Activated naive CD4-positive, alpha-beta T cell treated with anti-CD3 and anti-CD28 coated beads, Interleukin-2, amount 10 ng/mL, durations not matched to agents 7 days and 5 days (primary cell): ENCODE measurements at regions of chr9 and their contacts with region 1.

Region 1: DNA sequence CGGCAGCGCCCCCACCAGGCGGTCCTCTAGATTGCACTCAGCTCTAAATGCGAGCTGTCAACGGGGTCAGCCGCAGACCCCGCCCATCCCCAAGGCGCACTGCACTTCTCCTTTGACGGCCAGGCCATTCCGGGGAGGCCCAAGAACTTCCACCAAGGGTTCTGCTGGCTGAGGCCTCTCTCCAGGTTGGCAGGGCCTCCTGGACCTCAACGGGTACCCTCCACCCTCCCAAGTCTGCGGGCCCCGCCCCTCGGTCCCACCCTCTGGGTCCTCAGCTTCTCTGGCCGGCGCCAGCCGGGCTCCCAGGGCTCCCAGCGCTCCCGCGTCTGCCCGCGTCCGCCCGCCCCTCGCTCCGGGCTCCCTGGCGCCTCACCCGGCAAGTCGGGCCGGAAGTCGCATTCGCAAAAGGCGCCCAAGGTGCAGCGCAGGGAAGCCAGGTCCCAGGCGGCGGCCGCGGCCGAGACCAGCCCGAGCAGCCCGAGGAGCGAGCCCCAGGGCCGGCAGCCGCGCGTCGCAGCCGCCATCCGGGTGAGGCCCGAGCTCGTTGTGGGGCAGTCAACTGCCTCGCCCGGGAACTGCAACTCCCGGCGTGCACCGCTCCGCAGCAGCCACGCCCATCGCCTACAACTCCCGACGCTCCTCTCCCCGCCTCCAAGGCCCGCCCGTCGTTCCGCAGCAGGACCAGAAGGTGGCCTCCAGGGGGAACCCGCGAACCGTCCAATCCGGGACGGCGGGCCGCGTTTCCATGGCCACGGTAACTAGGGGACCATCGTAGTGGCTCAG is at the start of gene TOR2A:
- DNase-seq: peak; percentile 99
- H3K4me3 Mint-ChIP-seq: peak within 1 kb of the TSS; percentile 79
- H3K27ac Mint-ChIP-seq: peak within 1 kb of the TSS; percentile 92
- H3K4me1 Mint-ChIP-seq: peaks cover 28% of the 10 kb centered on the region
- H3K27me3 Mint-ChIP-seq: no peaks in the 10 kb centered on the region

Region 2: DNA sequence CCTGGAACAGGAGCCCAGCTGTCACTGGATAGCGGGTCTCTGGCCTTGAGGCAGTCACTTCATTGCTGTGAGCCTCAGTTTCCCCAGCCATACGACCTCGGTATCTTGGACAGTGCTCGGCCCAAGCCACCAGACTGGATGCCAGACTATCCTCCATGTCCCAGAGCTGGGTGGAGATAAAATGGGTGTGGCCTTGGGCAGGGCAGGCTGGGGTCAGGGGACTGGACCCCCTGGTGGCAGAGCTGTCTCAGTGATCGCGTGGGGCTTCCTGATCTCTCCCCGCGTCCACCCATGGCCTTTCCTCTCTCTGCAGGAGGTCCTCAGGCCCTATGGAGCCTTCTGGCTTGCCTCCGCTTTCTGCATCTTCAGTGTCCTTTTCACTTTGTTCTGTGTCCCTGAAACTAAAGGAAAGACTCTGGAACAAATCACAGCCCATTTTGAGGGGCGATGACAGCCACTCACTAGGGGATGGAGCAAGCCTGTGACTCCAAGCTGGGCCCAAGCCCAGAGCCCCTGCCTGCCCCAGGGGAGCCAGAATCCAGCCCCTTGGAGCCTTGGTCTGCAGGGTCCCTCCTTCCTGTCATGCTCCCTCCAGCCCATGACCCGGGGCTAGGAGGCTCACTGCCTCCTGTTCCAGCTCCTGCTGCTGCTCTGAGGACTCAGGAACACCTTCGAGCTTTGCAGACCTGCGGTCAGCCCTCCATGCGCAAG is 328.0 kb before region 1 on chr9:
- CTCF ChIA-PET with region 1: no interaction called
- DNase-seq: no peak
- H3K4me3 Mint-ChIP-seq: no peak overlapping the region
- H3K27ac Mint-ChIP-seq: no peak overlapping the region
- H3K4me1 Mint-ChIP-seq: no peaks in the 10 kb centered on the region
- H3K27me3 Mint-ChIP-seq: peaks cover 71% of the 10 kb centered on the region

Region 3: GRCh38 chr9:127503947-127504782 is 230.8 kb before region 1 on chr9:
- CTCF ChIA-PET with region 1: interaction called, 13 read pairs
- DNase-seq: peak; percentile 87
- H3K4me3 Mint-ChIP-seq: no peak overlapping the region
- H3K27ac Mint-ChIP-seq: peak overlapping the region; percentile 55
- H3K4me1 Mint-ChIP-seq: no peaks in the 10 kb centered on the region
- H3K27me3 Mint-ChIP-seq: no peaks in the 10 kb centered on the region

Region 4: GRCh38 chr9:127586537-127586936 is 148.4 kb before region 1 on chr9:
- CTCF ChIA-PET with region 1: interaction called, 44 read pairs
- DNase-seq: peak; percentile 78
- H3K4me3 Mint-ChIP-seq: no peak overlapping the region
- H3K27ac Mint-ChIP-seq: no peak overlapping the region
- H3K4me1 Mint-ChIP-seq: peaks cover 20% of the 10 kb centered on the region
- H3K27me3 Mint-ChIP-seq: peaks cover 35% of the 10 kb centered on the region

Region 5: GRCh38 chr9:127770905-127771569 is 36.1 kb after region 1 on chr9:
- CTCF ChIA-PET with region 1: interaction called, 20 read pairs
- DNase-seq: peak; percentile 99
- H3K4me3 Mint-ChIP-seq: peak overlapping the region; percentile 80
- H3K27ac Mint-ChIP-seq: peak overlapping the region; percentile 93
- H3K4me1 Mint-ChIP-seq: peaks cover 85% of the 10 kb centered on the region
- H3K27me3 Mint-ChIP-seq: no peaks in the 10 kb centered on the region

Region 6: DNA sequence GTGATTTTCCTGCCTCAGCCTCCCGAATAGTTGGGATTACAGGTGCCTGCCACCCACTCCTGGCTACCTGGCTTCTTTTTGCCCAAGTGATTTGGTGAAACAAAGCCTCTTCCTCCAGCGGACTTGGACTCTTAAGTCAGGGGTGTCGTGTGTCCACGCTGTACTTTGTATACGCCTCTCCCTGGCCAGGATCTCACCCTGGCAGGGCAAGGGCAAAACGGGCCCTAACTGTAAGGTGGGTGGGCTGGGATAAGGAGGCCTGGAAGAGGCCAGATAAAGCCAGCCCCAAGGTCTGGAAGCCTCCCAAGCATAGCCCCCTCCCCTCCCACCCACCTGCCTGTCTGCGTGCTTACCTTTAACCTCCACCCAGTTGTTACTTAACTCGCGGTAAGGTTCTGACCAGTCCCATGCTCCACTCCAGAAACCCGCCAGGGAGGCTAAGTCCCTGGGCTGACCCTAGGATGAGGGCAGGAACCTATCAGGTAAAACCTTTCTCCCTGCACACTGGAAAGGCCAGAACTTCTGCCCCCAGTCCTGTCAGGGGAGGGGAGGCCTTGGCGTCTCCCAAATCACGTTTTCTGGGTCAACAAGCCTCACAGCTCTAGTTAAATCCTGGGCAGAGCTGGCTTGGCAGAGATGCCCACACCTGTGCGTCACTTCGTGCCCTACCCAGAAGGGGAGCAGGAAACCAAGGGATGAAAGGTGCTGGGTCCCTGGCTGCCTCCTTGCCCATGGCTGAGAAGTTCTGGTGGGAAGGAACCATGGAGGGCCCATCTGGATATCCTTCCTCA is 59.3 kb after region 1 on chr9:
- CTCF ChIA-PET with region 1: no interaction called
- DNase-seq: no peak
- H3K4me3 Mint-ChIP-seq: no peak overlapping the region
- H3K27ac Mint-ChIP-seq: no peak overlapping the region
- H3K4me1 Mint-ChIP-seq: peaks cover 45% of the 10 kb centered on the region
- H3K27me3 Mint-ChIP-seq: no peaks in the 10 kb centered on the region

Region 7: DNA sequence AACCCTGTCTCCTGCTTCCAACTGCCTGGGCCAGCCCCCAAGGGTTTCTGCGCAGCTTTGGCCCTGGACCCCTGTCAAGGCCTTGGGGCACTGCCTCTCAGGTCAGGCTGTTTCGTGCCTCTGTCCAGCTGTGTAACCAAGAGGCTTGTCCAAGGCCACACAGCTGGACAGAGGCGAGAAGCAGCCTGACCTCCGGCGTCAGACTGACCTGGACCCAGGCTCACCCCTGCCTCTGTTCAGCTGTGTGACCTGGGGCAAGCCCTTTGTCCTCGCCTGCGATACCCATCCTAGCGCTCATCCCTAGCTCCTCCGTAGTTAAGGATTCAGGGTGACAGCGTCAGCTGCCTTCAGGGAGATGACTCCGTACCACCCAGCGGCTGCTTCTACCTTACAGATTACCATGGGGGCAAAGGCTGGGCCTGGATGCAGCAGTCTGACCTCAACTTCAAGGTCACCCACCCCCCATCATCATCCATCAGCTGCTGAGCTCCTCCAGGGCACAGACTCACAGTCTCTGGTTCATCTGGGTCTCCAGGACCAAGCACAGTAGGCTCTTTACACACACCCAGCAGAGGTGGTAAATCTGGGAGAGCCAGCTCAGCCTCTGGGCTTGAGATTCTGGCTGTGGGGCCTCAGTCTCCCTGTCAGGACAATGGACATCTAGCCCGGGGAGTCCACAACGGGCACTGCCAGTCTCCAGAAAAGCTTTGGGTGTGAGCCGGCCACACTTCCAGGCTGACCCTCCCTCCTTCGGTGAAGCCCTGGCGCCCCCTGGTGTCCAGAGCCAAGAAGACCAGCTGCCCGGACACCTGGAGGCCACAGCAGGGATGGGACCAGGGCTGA is 134.6 kb after region 1 on chr9:
- CTCF ChIA-PET with region 1: interaction called, 32 read pairs
- DNase-seq: peak; percentile 87
- H3K4me3 Mint-ChIP-seq: no peak overlapping the region
- H3K27ac Mint-ChIP-seq: no peak overlapping the region
- H3K4me1 Mint-ChIP-seq: peaks cover 18% of the 10 kb centered on the region
- H3K27me3 Mint-ChIP-seq: no peaks in the 10 kb centered on the region